A549 (cell line): ENCODE measurements at regions of chr10 and their contacts with region 1.

Region 1: GRCh38 chr10:17643755-17644484 is at the start of gene STAM:
- DNase-seq: peak; percentile 86 to 92
- ATAC-seq: peak; percentile 94 to 97
- H3K4me3 ChIP-seq: peak within 1 kb of the TSS; percentile 91
- H3K27ac ChIP-seq: peak within 1 kb of the TSS; percentile 96 to 97
- H3K4me1 ChIP-seq: peaks cover 30% of the 10 kb centered on the region
- CTCF ChIP-seq: no peak
- EP300 ChIP-seq: no peak
- POLR2A ChIP-seq: peak; percentile 29
- RAD21 ChIP-seq: 0 out of 5 replicates have a peak, but pooled peaks of 1 of the 2 experiments have one; percentile 17
- polyA plus RNA-seq, gene STAM: 37.3 and 51.7 TPM in 2 replicates

Region 2: DNA sequence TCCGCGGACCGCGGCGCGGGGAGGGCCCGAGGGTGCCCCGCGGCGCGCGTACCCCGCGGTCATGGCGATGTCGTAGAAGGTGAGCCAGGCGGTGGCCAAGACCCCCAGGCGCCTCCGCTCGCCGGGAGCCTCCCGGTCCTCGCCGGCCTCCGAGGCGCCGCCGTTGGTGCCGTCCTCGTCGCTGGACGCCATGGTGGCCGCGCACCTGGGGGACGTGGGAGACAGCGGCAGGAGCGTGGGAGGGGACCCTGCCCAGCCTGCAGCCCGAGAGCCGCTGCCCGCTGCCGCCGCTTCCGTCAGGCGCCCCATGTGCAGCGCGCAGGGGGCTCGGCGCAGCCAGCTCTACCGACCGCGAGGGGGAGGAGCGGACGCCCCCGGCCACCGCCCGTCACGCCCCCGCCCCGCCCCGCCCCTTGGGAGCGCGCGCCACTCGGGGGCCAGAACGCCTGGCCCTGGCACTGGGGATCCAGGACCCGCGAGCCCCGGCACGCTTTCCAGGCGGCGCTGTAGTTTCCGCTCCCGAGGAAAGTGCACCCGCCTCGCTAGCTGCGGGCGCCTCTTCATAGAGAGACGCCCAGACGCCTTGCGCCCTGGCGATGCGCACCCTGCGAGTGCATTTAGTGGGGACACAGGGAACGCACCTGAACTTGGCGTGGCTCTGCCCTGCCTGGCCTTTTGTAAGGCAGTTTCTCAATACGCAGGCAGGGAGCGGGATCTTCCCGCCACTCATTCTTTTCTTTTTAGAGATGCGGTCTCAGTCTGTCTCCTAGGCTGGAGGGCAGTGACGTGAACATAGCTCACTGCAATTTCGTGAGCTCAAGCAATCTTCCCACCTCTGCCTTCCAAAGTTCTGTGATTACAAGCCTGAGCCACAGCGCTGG is 26.6 kb before region 1 on chr10 and contains the start of gene HACD1:
- CTCF ChIA-PET with region 1: interaction called, 13 read pairs
- POLR2A ChIA-PET with region 1: interaction called, 53 read pairs
- DNase-seq: peak; percentile 82 to 88
- ATAC-seq: peak; percentile 94 to 97
- H3K4me3 ChIP-seq: peak within 1 kb of the TSS; percentile 79
- H3K27ac ChIP-seq: peak within 1 kb of the TSS; percentile 92 to 98
- H3K4me1 ChIP-seq: peaks cover 7% of the 10 kb centered on the region; the same call in 1 of the 3 replicates
- CTCF ChIP-seq: peak; percentile 47
- EP300 ChIP-seq: no peak; a peak in 1 of 5 replicates
- POLR2A ChIP-seq: peak; percentile 77
- RAD21 ChIP-seq: peak; percentile 2 to 51; a peak in 3 of 5 replicates
- polyA plus RNA-seq, gene HACD1: 74.1 and 92.1 TPM in 2 replicates

Region 3: GRCh38 chr10:17742918-17743317 is 99.0 kb after region 1 on chr10:
- CTCF ChIA-PET with region 1: interaction called, 12 read pairs
- POLR2A ChIA-PET with region 1: no interaction called
- DNase-seq: peak; percentile 50 to 65
- ATAC-seq: peak in 1 of 2 experiments; percentile 75; a peak in 3 of 6 replicates
- H3K4me3 ChIP-seq: peak overlapping the region; percentile 27; the same call in 1 of the 3 replicates
- H3K27ac ChIP-seq: peak overlapping the region; percentile 23 to 74; a peak in 4 of 6 replicates
- H3K4me1 ChIP-seq: peaks cover 3% of the 10 kb centered on the region; the same call in 1 of the 3 replicates
- CTCF ChIP-seq: peak; percentile 74
- EP300 ChIP-seq: no peak
- POLR2A ChIP-seq: no peak
- RAD21 ChIP-seq: peak; percentile 66 to 67

Region 4: GRCh38 chr10:17758200-17758599 is 114.3 kb after region 1 on chr10:
- CTCF ChIA-PET with region 1: no interaction called
- POLR2A ChIA-PET with region 1: no interaction called
- DNase-seq: no peak
- ATAC-seq: no peak
- H3K4me3 ChIP-seq: no peak overlapping the region
- H3K27ac ChIP-seq: no peak overlapping the region
- H3K4me1 ChIP-seq: peaks cover 5% of the 10 kb centered on the region; the same call in 1 of the 3 replicates
- CTCF ChIP-seq: no peak
- EP300 ChIP-seq: no peak
- POLR2A ChIP-seq: no peak
- RAD21 ChIP-seq: no peak